ENCODE measurements at regions of chr6 and their contacts with region 1.

Region 1: DNA sequence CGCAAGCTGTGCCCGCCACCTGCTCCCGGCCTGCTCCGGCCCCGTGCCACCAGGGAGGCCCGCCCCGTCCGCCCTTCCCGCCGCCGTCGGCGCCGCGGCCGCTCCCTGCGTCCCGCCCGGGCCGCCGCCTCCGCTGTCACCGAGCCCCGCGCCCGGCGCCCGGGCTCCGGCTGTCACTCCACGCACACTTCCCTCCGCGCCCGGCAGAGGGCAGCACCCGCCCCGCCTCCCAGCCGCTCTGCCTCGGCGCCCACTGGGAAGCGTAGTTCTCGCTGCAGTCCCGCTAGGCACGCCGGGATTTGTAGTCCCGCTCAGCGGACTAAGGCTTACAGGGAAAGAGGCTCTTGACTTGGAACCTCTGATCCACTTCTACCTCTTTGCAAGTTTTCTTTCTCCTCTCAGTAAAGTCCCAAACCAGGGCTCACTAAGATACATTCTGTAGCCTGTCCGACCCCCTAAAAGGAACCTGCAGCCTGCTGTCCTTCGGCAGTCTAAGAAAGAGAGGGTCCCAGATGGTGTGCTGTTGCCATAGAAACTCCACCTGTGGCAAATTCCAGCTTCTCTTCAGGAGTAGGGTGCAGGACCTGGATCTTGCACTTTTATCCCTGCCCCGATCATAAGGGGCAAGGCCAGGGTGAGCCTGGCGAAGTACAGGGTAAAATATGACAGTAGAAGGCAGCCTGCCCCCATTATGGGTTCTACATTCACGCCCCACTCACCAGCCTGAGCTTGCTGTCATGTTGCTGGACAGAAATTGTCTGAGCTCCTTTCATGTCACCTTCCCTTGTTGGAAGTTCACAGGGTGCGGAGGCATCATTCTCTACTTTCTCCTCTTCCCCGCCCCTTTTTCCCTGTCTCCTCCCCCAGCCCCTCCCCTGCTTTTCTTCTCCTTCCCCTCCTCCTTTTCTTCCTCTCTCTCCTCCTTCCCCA is at the start of gene TFEB:
- DNase-seq: peak in 1 of 2 experiments; percentile 98
- H3K4me3 ChIP-seq: peak within 1 kb of the TSS; percentile 36 to 74 (median 54)
- H3K27ac ChIP-seq: no peak within 1 kb of the TSS
- H3K4me1 ChIP-seq: peaks cover 3 to 27% (median 14%) of the 10 kb centered on the region in 4 experiments
- H3K27me3 ChIP-seq: peaks cover 0 to 8% (median 5%) of the 10 kb centered on the region in 4 experiments; a peak in 3 of 7 replicates
- CTCF ChIP-seq: peak in 2 of 3 experiments; percentile 89 to 92; a peak in 3 of 4 replicates
- EP300 ChIP-seq: no peak
- POLR2A ChIP-seq: no peak
- RAD21 ChIP-seq: peak; percentile 36 to 67
- total RNA-seq, gene TFEB: 2.3 and 2.4 TPM in 2 replicates

Region 2: GRCh38 chr6:41659935-41660505 is 75.7 kb before region 1 on chr6:
- CTCF ChIA-PET with region 1: no interaction called
- POLR2A ChIA-PET with region 1: no interaction called
- DNase-seq: no peak
- H3K4me3 ChIP-seq: no peak overlapping the region
- H3K27ac ChIP-seq: no peak overlapping the region
- H3K4me1 ChIP-seq: peaks cover 0 to 11% (median 6%) of the 10 kb centered on the region in 4 experiments; a peak in 6 of 7 replicates
- H3K27me3 ChIP-seq: no peaks in the 10 kb centered on the region; a peak in 1 of 7 replicates
- CTCF ChIP-seq: no peak
- EP300 ChIP-seq: no peak
- POLR2A ChIP-seq: no peak
- RAD21 ChIP-seq: no peak

Region 3: DNA sequence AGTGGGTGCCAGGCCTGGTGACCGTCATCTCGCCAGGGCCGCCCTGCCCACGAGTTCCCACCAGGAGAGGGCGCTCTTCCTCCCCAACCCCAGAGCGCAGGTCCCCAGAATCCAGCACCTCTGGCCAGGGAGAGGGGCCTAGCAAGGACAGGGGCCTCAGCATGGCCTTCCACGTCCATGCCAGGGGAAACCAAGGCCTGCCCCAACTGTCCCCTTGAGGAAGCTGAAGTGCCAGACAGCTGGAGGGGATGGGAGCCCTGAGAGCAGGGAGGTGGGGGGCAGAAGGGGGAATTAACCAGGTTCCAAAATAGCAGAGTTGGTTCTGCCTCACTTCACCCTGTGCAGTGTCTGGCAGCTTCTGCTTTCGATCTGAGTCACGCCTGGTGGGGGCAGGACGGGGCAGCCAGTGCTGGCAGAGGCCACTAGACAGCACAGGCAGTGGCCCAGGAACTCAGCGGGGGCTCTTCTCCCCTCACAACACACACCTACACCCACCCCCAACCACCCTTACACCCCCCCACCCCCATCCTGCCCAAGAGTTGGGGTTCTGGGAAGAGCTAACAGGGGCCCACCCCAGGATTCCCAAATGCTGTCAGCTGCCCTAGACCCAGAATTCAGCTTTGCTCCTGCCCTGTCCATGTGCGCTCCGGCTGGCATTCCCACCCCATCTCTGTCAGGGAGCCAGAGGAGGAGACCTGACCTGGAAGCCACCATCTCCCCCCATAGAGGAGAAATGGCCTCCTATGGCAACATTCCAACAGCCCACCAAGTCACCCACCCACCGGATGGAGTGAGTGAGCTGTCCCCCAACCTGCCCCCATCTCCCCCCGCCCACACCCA is 29.5 kb before region 1 on chr6:
- CTCF ChIA-PET with region 1: interaction called, 37 read pairs
- POLR2A ChIA-PET with region 1: no interaction called
- DNase-seq: peak; percentile 56 to 92
- H3K4me3 ChIP-seq: no peak overlapping the region
- H3K27ac ChIP-seq: no peak overlapping the region
- H3K4me1 ChIP-seq: peaks cover 0 to 8% (median 3%) of the 10 kb centered on the region in 4 experiments; a peak in 4 of 7 replicates
- H3K27me3 ChIP-seq: no peaks in the 10 kb centered on the region; a peak in 1 of 7 replicates
- CTCF ChIP-seq: peak in 2 of 3 experiments; percentile 92 to 97; a peak in 3 of 4 replicates
- EP300 ChIP-seq: no peak
- POLR2A ChIP-seq: no peak
- RAD21 ChIP-seq: peak; percentile 68 to 81

Region 4: DNA sequence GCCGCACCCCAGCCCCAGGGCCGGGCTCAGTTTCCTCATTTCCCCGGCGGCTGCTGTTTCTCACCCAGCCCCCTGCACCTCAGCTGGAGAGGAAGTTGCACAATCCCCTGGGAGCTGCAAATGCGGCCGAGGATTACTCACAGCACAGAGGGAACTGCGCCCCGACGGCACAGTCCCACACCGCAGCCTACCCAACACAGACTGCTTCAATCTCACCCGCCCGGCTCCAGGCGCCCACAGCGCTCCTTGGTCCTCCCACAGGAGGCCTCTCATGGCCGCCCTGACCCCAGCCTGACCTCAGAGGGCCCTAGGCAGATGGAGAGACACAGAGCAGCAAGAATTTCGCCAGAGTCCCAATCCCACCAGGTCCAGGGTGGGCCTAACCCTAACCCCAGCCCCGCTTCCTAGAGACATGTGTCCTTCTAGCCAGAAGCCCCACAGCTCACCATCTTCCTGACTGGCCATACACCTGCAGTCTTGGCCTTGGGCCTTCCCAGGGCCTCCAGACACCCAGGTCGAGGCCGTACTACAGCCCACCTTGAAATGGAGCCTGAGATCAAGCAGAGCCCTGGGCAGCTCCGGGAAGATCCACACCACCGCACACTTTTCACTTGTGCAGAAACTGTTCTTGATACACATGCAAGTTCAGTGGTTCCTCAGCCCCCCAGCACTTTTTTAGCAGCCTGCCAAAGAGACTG is 12.0 kb before region 1 on chr6:
- CTCF ChIA-PET with region 1: interaction called, 10 read pairs
- POLR2A ChIA-PET with region 1: no interaction called
- DNase-seq: no peak
- H3K4me3 ChIP-seq: no peak overlapping the region
- H3K27ac ChIP-seq: no peak overlapping the region
- H3K4me1 ChIP-seq: peaks cover 0 to 13% (median 8%) of the 10 kb centered on the region in 4 experiments; a peak in 5 of 7 replicates
- H3K27me3 ChIP-seq: no peaks in the 10 kb centered on the region
- CTCF ChIP-seq: no peak
- EP300 ChIP-seq: no peak
- POLR2A ChIP-seq: no peak
- RAD21 ChIP-seq: no peak

Region 5: GRCh38 chr6:41747256-41748101 is 11.8 kb after region 1 on chr6 and contains the start of gene PGC:
- CTCF ChIA-PET with region 1: interaction called, 21 read pairs
- POLR2A ChIA-PET with region 1: interaction called, 3 read pairs
- DNase-seq: no peak
- H3K4me3 ChIP-seq: no peak within 1 kb of the TSS
- H3K27ac ChIP-seq: no peak within 1 kb of the TSS
- H3K4me1 ChIP-seq: peaks cover 0 to 3% (median 0%) of the 10 kb centered on the region in 4 experiments; a peak in 2 of 7 replicates
- H3K27me3 ChIP-seq: no peaks in the 10 kb centered on the region
- CTCF ChIP-seq: no peak
- EP300 ChIP-seq: no peak
- POLR2A ChIP-seq: no peak
- RAD21 ChIP-seq: no peak
- total RNA-seq, gene PGC: not detected in 2 replicates

Region 6: GRCh38 chr6:41767156-41767833 is 31.6 kb after region 1 on chr6:
- CTCF ChIA-PET with region 1: interaction called, 10 read pairs
- POLR2A ChIA-PET with region 1: no interaction called
- DNase-seq: no peak
- H3K4me3 ChIP-seq: no peak overlapping the region
- H3K27ac ChIP-seq: no peak overlapping the region; the same call in 1 of the 2 replicates
- H3K4me1 ChIP-seq: no peaks in the 10 kb centered on the region; a peak in 1 of 7 replicates
- H3K27me3 ChIP-seq: no peaks in the 10 kb centered on the region
- CTCF ChIP-seq: no peak
- EP300 ChIP-seq: no peak
- POLR2A ChIP-seq: no peak
- RAD21 ChIP-seq: no peak